Heart right ventricle (tissue), 16 donors: ENCODE measurements at regions of chr12 and their contacts with region 1.

Region 1: DNA sequence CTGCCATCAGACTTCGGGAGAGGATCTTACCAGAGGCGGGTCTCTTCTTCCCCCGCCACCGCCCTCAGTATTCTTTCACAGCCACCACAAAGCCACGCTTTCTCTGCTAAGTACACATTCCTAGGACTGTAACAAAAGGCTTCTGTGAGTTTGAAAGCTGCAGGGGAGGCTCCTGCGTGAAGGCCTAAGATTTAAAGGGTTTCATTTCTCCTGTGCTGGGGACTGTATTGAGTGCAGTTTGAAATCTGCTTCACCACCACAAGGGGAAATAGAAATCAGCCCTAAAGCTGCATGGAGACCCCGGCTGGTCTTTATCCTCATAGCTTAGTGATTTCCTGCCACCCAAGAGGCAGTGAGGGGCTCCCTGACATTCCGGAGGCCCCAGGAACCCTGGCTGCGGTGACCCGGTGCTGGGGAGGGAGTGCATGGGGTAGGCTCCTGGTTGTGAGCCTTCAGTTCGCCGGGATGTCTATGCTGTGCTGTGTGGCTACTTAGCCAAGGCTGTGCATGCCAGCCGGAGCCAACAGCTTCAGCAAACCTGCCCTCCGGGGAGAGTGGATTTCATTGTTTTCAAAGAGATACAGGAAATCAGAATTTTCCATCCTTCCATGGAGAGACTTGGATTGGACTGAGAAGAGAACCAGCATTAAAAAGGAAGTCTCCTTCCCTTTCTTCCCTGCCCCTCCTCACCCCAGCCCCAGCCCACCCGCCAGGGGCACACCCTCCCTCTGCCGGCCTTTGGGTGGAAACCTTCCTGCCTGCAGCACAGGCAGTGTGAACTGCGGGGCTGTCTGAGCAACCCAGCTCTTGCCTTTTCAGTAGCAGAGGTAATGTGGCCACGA is 163.3 kb downstream of the ETV6 start:
- DNase-seq: peak; percentile 39 to 53
- ATAC-seq: peak; percentile 50 to 84 (median 78)
- H3K4me3 ChIP-seq: peak overlapping the region in 7 of 10 donors; percentile 21 to 40 (median 34)
- H3K27ac ChIP-seq: peak overlapping the region; percentile 62 to 91 (median 78)
- H3K4me1 ChIP-seq: peaks cover 24 to 71% (median 52%) of the 10 kb centered on the region in 9 donors
- H3K27me3 ChIP-seq: no peaks in the 10 kb centered on the region
- CTCF ChIP-seq: peak in 6 of 9 donors; percentile 13 to 34 (median 30)

Region 2: GRCh38 chr12:11730299-11731041 is 82.3 kb before region 1 on chr12:
- intact Hi-C with region 1: loop called in 1 of 10 experiments (anchors 10 kb)
- DNase-seq: no peak
- ATAC-seq: no peak
- H3K4me3 ChIP-seq: no peak overlapping the region
- H3K27ac ChIP-seq: peak overlapping the region in 1 of 10 donors; percentile 65
- H3K4me1 ChIP-seq: peaks cover 0 to 65% (median 21%) of the 10 kb centered on the region in 9 donors
- H3K27me3 ChIP-seq: no peaks in the 10 kb centered on the region
- CTCF ChIP-seq: no peak

Region 3: DNA sequence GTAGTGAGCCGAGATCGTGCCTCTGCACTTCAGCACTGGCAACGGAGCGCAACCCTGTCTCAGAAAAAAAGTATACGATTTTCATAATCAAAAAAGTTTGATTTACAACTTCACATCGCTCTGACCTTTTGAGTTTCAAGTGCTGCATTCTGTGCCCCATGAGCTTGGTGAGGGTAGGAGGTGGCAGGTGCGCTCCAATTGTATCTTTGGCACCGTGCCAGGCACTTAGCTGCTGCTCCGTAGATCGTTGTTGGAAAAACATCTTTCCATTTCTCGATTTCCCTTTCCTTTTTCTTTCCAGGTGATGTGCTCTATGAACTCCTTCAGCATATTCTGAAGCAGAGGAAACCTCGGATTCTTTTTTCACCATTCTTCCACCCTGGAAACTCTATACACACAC is 40.3 kb after region 1 on chr12:
- intact Hi-C with region 1: no loop called
- DNase-seq: no peak
- ATAC-seq: no peak
- H3K4me3 ChIP-seq: no peak overlapping the region
- H3K27ac ChIP-seq: no peak overlapping the region
- H3K4me1 ChIP-seq: peaks cover 0 to 39% (median 14%) of the 10 kb centered on the region in 9 donors
- H3K27me3 ChIP-seq: no peaks in the 10 kb centered on the region
- CTCF ChIP-seq: no peak